K562 (cell line): ENCODE measurements at regions of chr1 and their contacts with region 1.

Region 1: GRCh38 chr1:27858072-27858958 is 14.0 kb upstream of the THEMIS2 start:
- DNase-seq: peak; percentile 69 to 90 (median 76)
- ATAC-seq: peak; percentile 92
- H3K4me3 ChIP-seq: no peak overlapping the region
- H3K27ac ChIP-seq: no peak overlapping the region
- H3K4me1 ChIP-seq: peaks cover 8 to 23% of the 10 kb centered on the region in 2 experiments; a peak in 4 of 5 replicates
- H3K27me3 ChIP-seq: no peaks in the 10 kb centered on the region
- CTCF ChIP-seq: peak; percentile 94 to 100 (median 99)
- EP300 ChIP-seq: peak; percentile 54; the same call in 1 of the 2 replicates
- POLR2A ChIP-seq: no peak
- RAD21 ChIP-seq: peak; percentile 98 to 99

Region 2: GRCh38 chr1:27872059-27872801 is 13.9 kb after region 1 on chr1 and contains the start of gene THEMIS2:
- CTCF ChIA-PET with region 1: no interaction called
- POLR2A ChIA-PET with region 1: interaction called, 12 read pairs
- in situ Hi-C with region 1: no loop called
- intact Hi-C with region 1: no loop called
- DNase-seq: peak; percentile 82 to 97 (median 96)
- ATAC-seq: peak; percentile 94
- H3K4me3 ChIP-seq: peak within 1 kb of the TSS; percentile 67
- H3K27ac ChIP-seq: peak within 1 kb of the TSS; percentile 28; the same call in 1 of the 3 replicates
- H3K4me1 ChIP-seq: peaks cover 25 to 48% of the 10 kb centered on the region in 2 experiments
- H3K27me3 ChIP-seq: no peaks in the 10 kb centered on the region
- CTCF ChIP-seq: no peak
- EP300 ChIP-seq: no peak
- POLR2A ChIP-seq: peak; percentile 54; the same call in 1 of the 2 replicates
- RAD21 ChIP-seq: no peak
- polyA plus RNA-seq, gene THEMIS2: 2.3 to 3.4 TPM

Region 3: DNA sequence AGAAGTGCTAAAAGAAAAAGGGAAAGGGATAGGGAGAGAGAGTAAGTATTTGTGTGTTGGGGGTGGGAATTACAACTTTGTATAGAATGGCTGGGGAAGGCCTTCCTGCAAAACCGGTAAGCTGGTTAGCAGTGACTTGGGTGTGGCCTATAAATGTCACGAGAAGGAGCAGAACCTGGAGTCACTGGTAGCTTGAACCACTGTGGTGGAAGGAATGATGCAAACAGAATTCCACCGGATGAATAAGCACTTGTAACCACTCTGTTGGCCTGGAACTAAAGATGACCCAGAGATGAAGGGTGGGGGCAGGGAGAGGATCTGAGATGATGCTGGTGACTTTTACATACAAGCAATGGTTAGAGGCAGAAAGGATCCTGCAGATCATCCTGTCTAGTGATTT is 110.4 kb after region 1 on chr1:
- CTCF ChIA-PET with region 1: no interaction called
- POLR2A ChIA-PET with region 1: no interaction called
- in situ Hi-C with region 1: loop called (anchors 5 kb)
- intact Hi-C with region 1: no loop called
- DNase-seq: no peak
- ATAC-seq: no peak
- H3K4me3 ChIP-seq: no peak overlapping the region
- H3K27ac ChIP-seq: no peak overlapping the region
- H3K4me1 ChIP-seq: peaks cover 0 to 5% of the 10 kb centered on the region in 2 experiments; a peak in 1 of 5 replicates
- H3K27me3 ChIP-seq: no peaks in the 10 kb centered on the region
- CTCF ChIP-seq: no peak
- EP300 ChIP-seq: no peak
- POLR2A ChIP-seq: no peak
- RAD21 ChIP-seq: no peak

Region 4: DNA sequence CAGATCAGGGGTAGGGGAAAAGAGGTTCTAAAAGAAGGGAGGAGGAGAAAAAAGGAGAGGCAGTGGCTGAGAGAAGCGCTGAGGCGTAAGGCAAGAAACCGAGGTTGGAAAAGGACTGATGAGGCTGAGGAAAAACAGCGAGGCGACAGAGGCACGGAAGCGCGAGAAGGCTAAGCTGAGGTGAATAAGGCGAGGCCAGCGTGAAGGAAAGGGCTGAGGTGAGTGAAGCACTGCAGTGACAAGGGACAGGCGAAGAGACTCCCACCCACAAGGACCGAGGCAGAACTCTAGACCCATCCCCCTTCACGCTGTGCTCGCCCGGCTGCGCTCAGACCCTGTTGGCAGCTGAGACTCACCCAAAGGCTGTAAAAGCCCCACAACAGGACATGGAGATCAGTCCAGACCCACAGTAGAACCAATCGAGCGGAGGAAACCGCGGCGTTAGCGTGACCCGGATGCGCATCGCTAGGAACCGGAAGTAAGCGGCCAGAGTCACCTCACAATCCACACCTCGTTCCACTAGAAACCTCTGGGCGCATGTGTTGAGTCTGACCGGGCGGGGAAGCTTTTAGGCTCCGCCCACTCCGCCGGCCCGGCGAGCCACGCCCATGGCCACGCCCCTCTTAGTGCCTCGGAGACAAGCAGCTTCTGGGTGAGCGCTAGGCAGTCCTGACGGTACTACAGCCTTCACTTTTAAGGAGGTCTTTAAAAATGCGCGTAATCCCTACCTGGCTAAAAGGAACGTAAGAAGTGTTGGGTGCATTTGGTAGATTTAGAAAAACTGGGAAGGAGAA is 230.1 kb after region 1 on chr1 and contains the start of gene EYA3:
- CTCF ChIA-PET with region 1: no interaction called
- POLR2A ChIA-PET with region 1: no interaction called
- in situ Hi-C with region 1: no loop called
- intact Hi-C with region 1: loop called (anchors 1 kb)
- DNase-seq: peak; percentile 99 to 100 (median 100)
- ATAC-seq: peak; percentile 94
- H3K4me3 ChIP-seq: peak within 1 kb of the TSS; percentile 76
- H3K27ac ChIP-seq: peak within 1 kb of the TSS; percentile 90
- H3K4me1 ChIP-seq: peaks cover 12 to 14% of the 10 kb centered on the region in 2 experiments
- H3K27me3 ChIP-seq: no peaks in the 10 kb centered on the region
- CTCF ChIP-seq: no peak
- EP300 ChIP-seq: peak; percentile 11; the same call in 1 of the 2 replicates
- POLR2A ChIP-seq: peak; percentile 97
- RAD21 ChIP-seq: no peak
- polyA plus RNA-seq, gene EYA3: 29.4 to 43.6 TPM

Region 5: DNA sequence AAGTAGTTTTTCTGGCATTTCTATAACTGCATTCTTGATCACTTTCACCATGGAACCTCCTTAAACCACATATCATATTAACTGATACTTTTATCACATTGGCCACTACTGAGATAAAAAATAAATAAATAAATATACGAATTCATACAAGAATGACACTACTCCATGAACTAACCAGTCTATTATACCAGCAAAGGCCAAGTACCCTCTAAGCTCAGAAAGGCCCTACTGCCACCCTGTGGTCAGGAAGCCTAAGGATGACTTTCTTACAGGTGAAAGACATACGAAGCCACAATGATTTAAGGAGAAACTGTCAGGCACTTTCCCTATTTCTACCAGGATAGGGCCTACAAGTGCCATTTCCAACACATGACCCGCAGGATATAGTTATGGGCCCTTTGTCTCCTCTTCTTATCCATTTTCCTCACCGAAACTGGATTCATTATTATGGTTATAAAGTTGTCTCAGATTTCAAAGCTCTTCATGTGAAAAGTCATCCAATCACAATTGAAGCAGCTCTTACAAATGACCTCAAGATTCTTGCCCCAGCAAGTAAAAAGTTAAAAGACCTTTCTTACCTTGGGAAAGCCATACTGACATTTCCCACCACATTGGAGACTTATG is 350.6 kb after region 1 on chr1:
- CTCF ChIA-PET with region 1: interaction called, 3 read pairs
- POLR2A ChIA-PET with region 1: no interaction called
- in situ Hi-C with region 1: no loop called
- intact Hi-C with region 1: loop called (anchors 1 kb)
- DNase-seq: peak; percentile 49 to 75 (median 62)
- ATAC-seq: peak; percentile 98
- H3K4me3 ChIP-seq: no peak overlapping the region
- H3K27ac ChIP-seq: 0 out of 3 replicates have a peak overlapping the region, but pooled peaks have one; percentile 5
- H3K4me1 ChIP-seq: peaks cover 0 to 2% of the 10 kb centered on the region in 2 experiments; a peak in 1 of 5 replicates
- H3K27me3 ChIP-seq: no peaks in the 10 kb centered on the region
- CTCF ChIP-seq: peak; percentile 77 to 93 (median 80)
- EP300 ChIP-seq: no peak
- POLR2A ChIP-seq: no peak
- RAD21 ChIP-seq: peak; percentile 91 to 97